Dorsolateral prefrontal cortex (tissue), 120 donors: ENCODE measurements at regions of chr14 and their contacts with region 1.

Region 1: DNA sequence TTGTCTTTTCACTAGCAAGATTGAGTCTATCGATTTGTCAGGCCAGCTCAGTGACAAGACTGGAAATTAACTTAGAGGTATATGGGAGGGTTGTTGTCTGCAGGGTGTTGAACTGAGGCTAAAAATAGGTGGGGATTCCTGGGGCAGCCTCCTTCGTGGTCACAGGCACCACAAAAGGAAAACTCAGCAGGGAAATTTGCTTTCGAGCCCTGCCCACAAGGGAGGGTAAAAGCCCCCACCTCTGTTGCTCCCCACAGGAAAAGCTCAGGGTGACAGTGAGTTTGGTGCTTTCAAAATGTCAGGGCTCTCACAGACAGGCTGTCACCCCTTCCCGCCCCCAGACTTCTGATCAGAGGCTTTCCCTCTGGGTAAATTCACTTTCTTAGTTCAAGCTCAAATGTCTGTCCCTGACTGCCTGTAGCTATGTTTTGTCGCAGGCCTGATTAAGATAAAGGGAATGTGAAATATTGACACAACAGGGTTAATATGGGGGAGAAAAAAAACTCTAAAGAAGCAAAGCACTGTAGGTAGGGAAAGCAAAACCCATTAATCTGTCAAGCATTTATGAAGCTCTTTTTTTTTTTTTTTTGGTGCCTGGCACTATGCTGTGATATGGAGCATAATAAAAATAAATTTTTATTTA is 11.7 kb upstream of the NFKBIA start:
- DNase-seq: no peak
- H3K4me3 ChIP-seq: no peak overlapping the region
- H3K27ac ChIP-seq: no peak overlapping the region
- H3K27me3 ChIP-seq: no peaks in the 10 kb centered on the region
- CTCF ChIP-seq: no peak

Region 2: GRCh38 chr14:35046048-35046741 is 370.0 kb before region 1 on chr14 and contains the start of gene FAM177A1:
- intact Hi-C with region 1: loop called in 1 of 2 experiments (anchors 10 kb)
- DNase-seq: peak; percentile 97 to 99 (median 98)
- H3K4me3 ChIP-seq: peak within 1 kb of the TSS; percentile 60 to 97 (median 91)
- H3K27ac ChIP-seq: peak within 1 kb of the TSS; percentile 92 to 100 (median 98)
- H3K27me3 ChIP-seq: no peaks in the 10 kb centered on the region
- CTCF ChIP-seq: peak in 24 of 56 donors; percentile 11 to 45 (median 30)
- total RNA-seq, gene FAM177A1: 34.2 to 106 (median 58.8) TPM

Region 3: DNA sequence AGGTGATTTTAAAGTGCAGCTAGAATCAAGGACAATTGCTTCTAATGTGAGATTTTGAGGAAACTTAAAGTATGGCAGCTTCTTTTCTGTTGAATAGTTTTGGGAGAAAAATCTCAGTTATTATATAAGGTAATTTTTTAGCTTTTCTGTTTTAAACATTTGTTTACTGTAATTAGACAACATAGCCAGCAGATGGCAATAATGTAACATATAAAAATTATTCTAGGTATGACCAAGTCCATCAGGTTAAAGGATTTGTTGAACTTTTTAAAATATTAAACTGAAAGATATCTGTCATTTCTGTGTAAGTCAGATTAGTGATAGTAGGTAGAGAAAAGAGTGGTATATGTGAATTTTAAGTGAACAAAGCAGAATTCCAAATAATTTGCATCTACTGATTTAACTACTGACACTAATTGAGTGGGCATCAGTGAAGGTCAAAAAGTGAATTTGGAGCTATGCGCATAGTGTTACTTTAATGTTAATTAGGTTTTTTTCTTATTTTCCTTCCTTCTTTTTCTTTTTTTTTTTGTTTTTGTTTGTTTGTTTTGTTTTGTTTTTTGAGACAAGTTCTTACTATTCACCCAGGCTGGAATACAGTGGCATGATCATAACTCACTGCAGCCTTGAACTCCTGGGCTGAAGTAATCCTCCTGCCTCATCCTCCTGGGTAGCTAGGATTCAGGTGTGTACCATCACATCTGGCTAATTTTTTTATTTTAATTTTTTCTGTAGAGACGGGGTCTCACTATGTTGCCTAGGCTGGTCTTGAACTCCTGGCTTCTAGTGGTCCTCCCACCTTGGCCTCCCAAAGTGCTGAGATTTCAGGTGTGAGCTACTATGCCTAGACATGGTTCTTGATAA is 275.3 kb before region 1 on chr14:
- intact Hi-C with region 1: loop called (anchors 1 to 5 kb)
- DNase-seq: no peak
- H3K4me3 ChIP-seq: no peak overlapping the region
- H3K27ac ChIP-seq: no peak overlapping the region
- H3K27me3 ChIP-seq: no peaks in the 10 kb centered on the region
- CTCF ChIP-seq: peak in 54 of 56 donors; percentile 34 to 89 (median 64)

Region 4: DNA sequence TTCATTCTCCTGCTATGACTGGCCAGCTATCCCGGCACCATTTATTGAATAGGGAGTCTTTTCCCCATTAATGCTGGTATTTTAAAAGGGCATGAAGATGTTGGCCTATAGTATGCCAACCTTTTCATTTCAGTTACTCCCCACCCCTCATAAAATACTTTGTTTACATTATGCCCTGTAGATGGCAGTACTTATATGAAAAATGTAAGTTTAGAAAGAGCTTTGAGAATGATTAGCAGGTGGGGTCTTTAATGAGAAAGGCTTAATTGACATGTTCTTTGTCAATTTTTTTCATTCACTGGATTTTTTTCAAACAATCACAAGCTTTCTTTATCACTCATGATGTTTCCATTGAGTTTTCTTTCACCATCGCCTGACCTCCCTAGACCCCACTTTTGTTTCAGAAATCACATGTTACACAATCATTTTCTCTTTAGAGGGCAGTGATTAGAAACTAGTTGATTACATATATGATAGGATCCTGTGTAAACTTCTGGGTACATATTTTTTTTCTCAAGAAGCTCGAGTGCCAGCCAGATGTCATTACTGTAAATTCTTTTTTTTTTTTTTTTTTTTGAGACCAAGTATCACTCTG is 186.6 kb before region 1 on chr14:
- intact Hi-C with region 1: loop called in 1 of 2 experiments (anchors 5 kb)
- DNase-seq: no peak
- H3K4me3 ChIP-seq: no peak overlapping the region
- H3K27ac ChIP-seq: no peak overlapping the region
- H3K27me3 ChIP-seq: no peaks in the 10 kb centered on the region
- CTCF ChIP-seq: peak in 53 of 56 donors; percentile 11 to 68 (median 40)

Region 5: GRCh38 chr14:35480128-35480769 is 64.0 kb after region 1 on chr14:
- intact Hi-C with region 1: no loop called
- DNase-seq: no peak
- H3K4me3 ChIP-seq: no peak overlapping the region
- H3K27ac ChIP-seq: no peak overlapping the region
- H3K27me3 ChIP-seq: no peaks in the 10 kb centered on the region
- CTCF ChIP-seq: no peak